Transverse colon (tissue), 4 donors: ENCODE measurements at regions of chr4 and their contacts with region 1.

Region 1: DNA sequence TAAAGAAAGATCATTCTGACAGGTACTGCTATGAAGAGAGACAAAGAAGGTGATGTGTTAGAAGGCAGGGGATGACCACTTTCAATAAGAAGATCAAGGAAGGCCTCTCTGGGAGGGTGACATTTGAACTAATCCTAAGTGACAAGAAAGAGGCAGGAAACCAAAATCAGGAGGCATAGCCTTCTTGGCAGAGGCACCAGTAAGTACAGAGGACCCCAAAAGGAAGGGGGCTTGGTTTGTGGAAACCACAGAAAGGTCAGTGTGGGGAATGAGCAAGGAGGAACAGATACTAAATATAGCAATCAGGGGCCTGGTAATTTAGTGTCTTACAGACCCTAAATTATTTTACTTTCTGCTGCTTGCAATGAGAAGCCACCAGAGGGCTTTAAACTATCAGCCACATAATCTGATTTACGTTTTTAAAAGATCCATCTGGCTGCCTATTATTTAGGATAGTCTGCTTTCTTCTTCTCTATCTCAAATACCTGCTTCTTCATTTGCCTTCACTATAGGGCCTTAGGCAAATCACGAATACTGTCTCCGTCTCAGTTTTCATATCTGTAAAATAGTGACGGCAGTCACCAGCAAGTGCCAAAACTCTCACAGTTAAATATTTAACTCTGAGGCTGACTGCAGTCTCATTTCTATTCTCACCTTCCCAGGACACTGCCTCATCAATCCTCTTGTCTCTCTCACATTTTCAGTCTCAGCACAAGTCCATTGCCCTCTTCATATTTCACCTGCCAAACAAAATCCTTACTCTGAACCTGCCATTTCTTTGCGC is 16.7 kb downstream of the NR3C2 start:
- DNase-seq: no peak
- H3K4me3 ChIP-seq: no peak overlapping the region
- H3K27ac ChIP-seq: no peak overlapping the region
- H3K4me1 ChIP-seq: peaks cover 7 to 30% (median 15%) of the 10 kb centered on the region in 4 donors
- H3K27me3 ChIP-seq: no peaks in the 10 kb centered on the region
- CTCF ChIP-seq: peak in 1 of 5 experiments; percentile 4
- EP300 ChIP-seq: no peak
- POLR2A ChIP-seq: no peak

Region 2: DNA sequence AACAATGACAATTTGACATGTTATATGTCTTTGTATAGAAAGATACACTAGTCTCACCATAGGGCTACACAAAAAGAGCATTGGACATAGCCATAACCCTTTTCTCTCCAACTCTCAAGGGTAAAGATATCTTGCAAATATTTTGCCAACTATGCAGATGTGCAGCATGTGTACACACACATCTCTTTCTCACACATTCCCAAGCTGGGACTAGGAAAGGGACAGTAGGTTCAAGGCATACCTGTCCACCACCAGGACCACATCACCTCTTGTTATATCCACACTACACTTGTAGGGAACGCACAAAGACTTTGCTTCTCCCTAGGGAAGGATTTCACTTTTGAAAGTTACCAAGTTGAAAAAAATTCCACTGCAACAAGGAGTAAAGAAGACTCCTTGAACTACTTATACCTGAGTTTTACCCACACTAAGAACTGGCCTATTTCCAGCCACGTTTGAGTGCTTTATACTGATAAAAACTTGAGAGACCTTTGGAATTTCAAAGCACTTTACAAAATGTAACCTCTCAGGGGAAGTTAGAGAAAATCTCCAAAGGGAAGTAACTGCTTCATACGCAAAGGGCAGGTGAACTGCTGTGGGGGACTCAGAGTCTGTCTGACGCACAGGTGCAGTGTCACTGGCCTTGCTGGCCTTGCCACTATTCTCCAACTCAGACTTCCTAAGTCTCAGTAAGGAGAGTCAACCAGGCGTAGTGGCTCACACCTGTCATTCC is 20.2 kb before region 1 on chr4:
- in situ Hi-C with region 1: no loop called
- intact Hi-C with region 1: loop called (anchors 1 kb)
- DNase-seq: no peak
- H3K4me3 ChIP-seq: no peak overlapping the region
- H3K27ac ChIP-seq: peak overlapping the region in 1 of 4 donors; percentile 14
- H3K4me1 ChIP-seq: peaks cover 0 to 17% (median 4%) of the 10 kb centered on the region in 4 donors
- H3K27me3 ChIP-seq: no peaks in the 10 kb centered on the region
- CTCF ChIP-seq: no peak
- EP300 ChIP-seq: no peak
- POLR2A ChIP-seq: no peak